ENCODE measurements at regions of chr20 and their contacts with region 1.

Region 1: GRCh38 chr20:7375905-7376304 is 564.4 kb downstream of the HAO1 start:
- DNase-seq: no peak
- H3K4me3 ChIP-seq: no peak overlapping the region
- H3K27ac ChIP-seq: no peak overlapping the region
- H3K4me1 ChIP-seq: peaks cover 0 to 4% (median 1%) of the 10 kb centered on the region in 4 experiments; a peak in 2 of 7 replicates
- H3K27me3 ChIP-seq: no peaks in the 10 kb centered on the region
- CTCF ChIP-seq: peak in 1 of 3 experiments; percentile 18; a peak in 1 of 4 replicates
- EP300 ChIP-seq: no peak
- POLR2A ChIP-seq: no peak
- RAD21 ChIP-seq: peak in 1 of 2 experiments; percentile 52; a peak in 3 of 4 replicates

Region 2: GRCh38 chr20:7362601-7363000 is 13.3 kb before region 1 on chr20:
- CTCF ChIA-PET with region 1: interaction called, 17 read pairs
- POLR2A ChIA-PET with region 1: no interaction called
- DNase-seq: no peak
- H3K4me3 ChIP-seq: no peak overlapping the region
- H3K27ac ChIP-seq: no peak overlapping the region
- H3K4me1 ChIP-seq: peaks cover 0 to 8% (median 1%) of the 10 kb centered on the region in 4 experiments; a peak in 2 of 7 replicates
- H3K27me3 ChIP-seq: no peaks in the 10 kb centered on the region
- CTCF ChIP-seq: no peak
- EP300 ChIP-seq: no peak
- POLR2A ChIP-seq: no peak
- RAD21 ChIP-seq: no peak

Measured in H1 (cell line).